Activated CD4-positive, alpha-beta memory T cell treated with anti-CD3 and anti-CD28 coated beads, Interleukin-2, amount 10 ng/mL, durations not matched to agents 7 days and 5 days (primary cell): ENCODE measurements at regions of chr5 and their contacts with region 1.

Region 1: DNA sequence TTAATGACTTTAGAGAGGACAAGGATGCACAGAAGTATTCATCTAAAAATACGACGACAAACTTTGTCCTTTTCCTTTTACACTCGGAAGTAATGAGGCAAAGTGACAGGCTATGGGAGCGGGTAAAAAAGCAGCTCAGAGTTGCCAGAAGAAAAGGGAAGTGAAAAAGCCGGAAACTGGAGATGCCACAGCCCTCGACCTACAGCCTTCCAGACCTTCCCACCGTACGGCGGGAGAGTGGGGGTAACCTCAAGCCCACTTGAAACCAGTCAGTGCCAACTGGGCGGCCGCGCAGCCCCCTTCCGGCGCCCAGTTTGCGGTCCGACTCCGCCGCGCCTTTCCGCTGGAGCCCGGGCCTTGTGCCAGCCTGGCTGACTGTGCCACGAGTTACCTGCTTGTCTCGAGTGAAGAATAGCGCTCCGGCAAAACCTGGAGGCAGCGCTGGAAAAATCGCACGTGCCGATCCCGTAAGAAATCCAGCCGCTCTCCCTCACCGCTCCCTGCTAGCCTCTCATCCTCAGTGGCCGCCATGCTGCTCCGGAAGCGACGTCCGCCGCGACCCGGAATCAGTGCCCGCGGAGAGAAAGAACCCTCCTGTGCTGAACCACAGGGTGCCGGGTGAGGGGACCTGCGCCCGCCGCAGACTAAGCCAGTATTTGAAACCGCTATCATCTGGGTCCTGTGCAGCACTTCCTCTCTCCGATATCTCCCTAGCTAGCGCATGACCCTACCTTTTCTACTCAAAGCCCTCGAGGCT is at the start of gene PGGT1B:
- DNase-seq: peak; percentile 78
- H3K4me3 Mint-ChIP-seq: peak within 1 kb of the TSS; percentile 98
- H3K27ac Mint-ChIP-seq: peak within 1 kb of the TSS; percentile 90
- H3K4me1 Mint-ChIP-seq: peaks cover 35% of the 10 kb centered on the region
- H3K27me3 Mint-ChIP-seq: no peaks in the 10 kb centered on the region
- total RNA-seq, gene PGGT1B: 43.4 to 43.6 TPM

Region 2: GRCh38 chr5:115296124-115297022 is 33.9 kb after region 1 on chr5 and contains the start of gene CCDC112:
- CTCF ChIA-PET with region 1: no interaction called
- POLR2A ChIA-PET with region 1: interaction called, 17 read pairs
- DNase-seq: peak; percentile 78
- H3K4me3 Mint-ChIP-seq: peak within 1 kb of the TSS; percentile 76
- H3K27ac Mint-ChIP-seq: no peak within 1 kb of the TSS
- H3K4me1 Mint-ChIP-seq: peaks cover 12% of the 10 kb centered on the region
- H3K27me3 Mint-ChIP-seq: peaks cover 51% of the 10 kb centered on the region
- total RNA-seq, gene CCDC112: 2.0 TPM